ENCODE measurements at regions of chr12 and their contacts with region 1.

Region 1: GRCh38 chr12:21677622-21678277 is 20.1 kb upstream of the LDHB start:
- DNase-seq: no peak
- H3K4me3 ChIP-seq: no peak overlapping the region
- H3K27ac ChIP-seq: no peak overlapping the region
- H3K4me1 ChIP-seq: peaks cover 4% of the 10 kb centered on the region
- H3K27me3 ChIP-seq: peaks cover 9 to 11% of the 10 kb centered on the region in 2 experiments
- CTCF ChIP-seq: no peak
- POLR2A ChIP-seq: no peak

Region 2: GRCh38 chr12:21296751-21297406 is 380.9 kb before region 1 on chr12:
- CTCF ChIA-PET with region 1: interaction called, 9 read pairs
- POLR2A ChIA-PET with region 1: no interaction called
- dilution Hi-C with region 1: no loop called
- intact Hi-C with region 1: loop called (anchors 5 kb)
- DNase-seq: peak; percentile 13
- H3K4me3 ChIP-seq: no peak overlapping the region
- H3K27ac ChIP-seq: no peak overlapping the region
- H3K4me1 ChIP-seq: no peaks in the 10 kb centered on the region
- H3K27me3 ChIP-seq: no peaks in the 10 kb centered on the region
- CTCF ChIP-seq: peak; percentile 62 to 65
- POLR2A ChIP-seq: no peak

Region 3: DNA sequence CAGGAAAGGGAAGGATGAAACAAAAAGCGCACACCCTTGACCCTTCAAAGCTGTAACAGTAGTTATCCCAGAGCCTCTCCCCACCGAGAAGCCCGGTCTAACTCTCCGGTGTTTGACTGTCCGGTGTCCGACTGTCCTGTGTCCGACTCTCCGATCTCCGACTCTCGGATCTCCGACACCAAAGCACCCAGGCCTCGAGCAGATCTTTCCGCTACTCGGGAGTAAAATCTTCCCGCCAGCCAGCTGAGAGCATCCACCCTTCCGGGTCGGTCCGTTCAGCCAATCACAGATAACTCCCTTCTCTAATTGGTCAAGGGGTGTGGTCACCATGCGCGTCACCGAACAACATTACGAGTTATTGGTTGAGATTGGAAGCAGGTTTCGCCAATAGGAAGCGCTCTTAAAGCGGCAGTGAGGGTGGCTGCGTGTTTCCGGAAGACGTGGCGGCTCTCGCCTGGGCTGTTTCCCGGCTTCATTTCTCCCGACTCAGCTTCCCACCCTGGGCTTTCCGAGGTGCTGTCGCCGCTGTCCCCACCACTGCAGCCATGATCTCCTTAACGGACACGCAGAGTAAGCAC is 176.3 kb before region 1 on chr12 and contains the starts of genes GOLT1B and RECQL:
- CTCF ChIA-PET with region 1: interaction called, 9 read pairs
- POLR2A ChIA-PET with region 1: no interaction called
- dilution Hi-C with region 1: no loop called
- intact Hi-C with region 1: loop called (anchors 2 kb)
- DNase-seq: peak; percentile 99
- H3K4me3 ChIP-seq: peak within 1 kb of the TSS; percentile 80 to 92 (median 88)
- H3K27ac ChIP-seq: peak within 1 kb of the TSS; percentile 87
- H3K4me1 ChIP-seq: peaks cover 31% of the 10 kb centered on the region
- H3K27me3 ChIP-seq: no peaks in the 10 kb centered on the region
- CTCF ChIP-seq: no peak
- POLR2A ChIP-seq: peak; percentile 90
- total RNA-seq, gene GOLT1B: 50.5 and 59.4 TPM in 2 replicates
- total RNA-seq, gene RECQL: 50.3 and 51.4 TPM in 2 replicates

Region 4: GRCh38 chr12:21607701-21608100 is 70.0 kb before region 1 on chr12:
- CTCF ChIA-PET with region 1: interaction called, 16 read pairs
- POLR2A ChIA-PET with region 1: no interaction called
- dilution Hi-C with region 1: no loop called
- intact Hi-C with region 1: loop called (anchors 1 kb)
- DNase-seq: peak; percentile 42
- H3K4me3 ChIP-seq: no peak overlapping the region
- H3K27ac ChIP-seq: no peak overlapping the region
- H3K4me1 ChIP-seq: peaks cover 3% of the 10 kb centered on the region
- H3K27me3 ChIP-seq: no peaks in the 10 kb centered on the region
- CTCF ChIP-seq: no peak
- POLR2A ChIP-seq: no peak

Region 5: DNA sequence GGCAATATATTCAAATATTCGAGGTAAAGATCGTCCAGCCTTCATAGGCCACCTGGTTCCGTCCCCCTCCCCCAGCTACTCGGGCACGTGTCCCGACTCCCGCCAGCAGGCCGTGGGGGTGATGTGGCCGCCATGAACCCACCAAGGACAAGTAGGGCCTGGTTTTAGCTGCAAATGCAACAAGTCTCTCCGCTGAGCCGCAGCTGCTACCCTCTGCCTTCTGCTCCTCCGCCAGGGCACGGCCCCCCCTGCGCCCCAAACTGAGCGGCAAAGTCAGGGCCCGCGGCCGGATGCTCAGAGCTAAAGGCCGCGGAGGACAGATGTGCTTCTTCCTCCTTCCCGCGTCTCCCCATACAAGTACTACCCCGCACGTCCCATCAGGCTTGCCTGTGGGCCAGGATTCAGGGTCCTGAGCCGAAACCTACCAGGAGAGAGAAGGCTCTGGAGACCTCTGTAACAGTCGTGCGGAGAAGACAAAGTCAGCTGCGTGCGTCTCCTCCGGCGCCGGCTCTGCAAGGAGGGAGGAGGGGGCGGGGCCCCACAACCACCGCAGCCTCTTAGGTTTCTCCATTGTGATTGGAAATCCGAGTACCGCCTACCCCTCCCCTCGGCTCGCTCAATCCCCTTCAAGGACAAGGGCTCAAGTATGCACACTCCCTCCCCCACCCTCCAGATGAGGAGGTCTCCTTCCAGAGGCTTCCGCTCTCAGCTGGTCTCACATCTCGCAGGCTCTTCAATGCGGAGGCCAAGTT is 20.2 kb before region 1 on chr12 and contains the start of gene LDHB:
- CTCF ChIA-PET with region 1: interaction called, 21 read pairs
- POLR2A ChIA-PET with region 1: no interaction called
- dilution Hi-C with region 1: no loop called
- intact Hi-C with region 1: loop called (anchors 2 kb)
- DNase-seq: peak; percentile 97
- H3K4me3 ChIP-seq: peak within 1 kb of the TSS; percentile 83 to 89 (median 85)
- H3K27ac ChIP-seq: peak within 1 kb of the TSS; percentile 83
- H3K4me1 ChIP-seq: peaks cover 14% of the 10 kb centered on the region
- H3K27me3 ChIP-seq: peaks cover 2 to 9% of the 10 kb centered on the region in 2 experiments
- CTCF ChIP-seq: no peak
- POLR2A ChIP-seq: peak; percentile 98
- total RNA-seq, gene LDHB: 670 and 703 TPM in 2 replicates

Region 6: DNA sequence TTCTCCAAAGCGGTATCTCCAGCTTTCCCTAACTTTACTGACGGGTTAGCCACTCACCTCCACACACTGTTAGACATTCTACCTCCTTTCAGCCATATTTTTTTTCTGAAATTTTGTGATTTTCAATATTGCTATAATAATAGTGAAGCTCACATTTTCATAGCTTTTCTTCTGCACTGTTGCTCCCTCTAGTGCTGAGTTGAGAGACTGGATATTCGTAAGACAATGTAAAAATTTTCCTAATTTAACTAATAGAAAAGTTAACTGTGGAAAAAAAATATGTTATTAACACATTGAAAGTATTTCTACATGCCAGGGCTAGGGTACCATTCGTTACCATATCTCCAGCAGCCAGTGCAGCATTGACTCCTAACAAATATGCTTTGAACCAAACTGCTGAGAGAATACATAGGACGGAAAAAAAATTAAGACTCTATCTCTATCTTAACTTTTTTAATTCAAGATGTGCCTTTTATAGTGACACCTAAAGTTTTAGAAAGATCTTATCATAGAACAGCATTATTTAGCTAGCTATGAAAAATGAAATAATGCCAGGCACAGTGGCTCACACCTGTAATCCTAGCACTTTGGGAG is 312.2 kb after region 1 on chr12:
- CTCF ChIA-PET with region 1: interaction called, 13 read pairs
- POLR2A ChIA-PET with region 1: no interaction called
- dilution Hi-C with region 1: no loop called
- intact Hi-C with region 1: no loop called
- DNase-seq: peak; percentile 41
- H3K4me3 ChIP-seq: no peak overlapping the region
- H3K27ac ChIP-seq: no peak overlapping the region
- H3K4me1 ChIP-seq: peaks cover 9% of the 10 kb centered on the region
- H3K27me3 ChIP-seq: peaks cover 0 to 3% of the 10 kb centered on the region in 2 experiments
- CTCF ChIP-seq: peak; percentile 28 to 38
- POLR2A ChIP-seq: no peak